Activated B cell treated with CpG ODN at 0.5 μM for 24 hours (primary cell): ENCODE measurements at regions of chr15 and their contacts with region 1.

Region 1: GRCh38 chr15:49279521-49280456 is 109.7 kb downstream of the GALK2 start:
- DNase-seq: no peak
- ATAC-seq: no peak
- H3K4me3 Mint-ChIP-seq: no peak overlapping the region
- H3K27ac Mint-ChIP-seq: no peak overlapping the region
- H3K4me1 Mint-ChIP-seq: no peaks in the 10 kb centered on the region
- H3K27me3 Mint-ChIP-seq: no peaks in the 10 kb centered on the region
- CTCF ChIP-seq: no peak

Region 2: GRCh38 chr15:49223536-49224286 is 56.1 kb before region 1 on chr15:
- CTCF ChIA-PET with region 1: no interaction called
- POLR2A ChIA-PET with region 1: no interaction called
- intact Hi-C with region 1: loop called (anchors 2 kb)
- DNase-seq: no peak
- ATAC-seq: no peak
- H3K4me3 Mint-ChIP-seq: no peak overlapping the region
- H3K27ac Mint-ChIP-seq: no peak overlapping the region
- H3K4me1 Mint-ChIP-seq: peaks cover 2% of the 10 kb centered on the region
- H3K27me3 Mint-ChIP-seq: no peaks in the 10 kb centered on the region
- CTCF ChIP-seq: no peak

Region 3: GRCh38 chr15:49558924-49559323 is 279.1 kb after region 1 on chr15:
- CTCF ChIA-PET with region 1: no interaction called
- POLR2A ChIA-PET with region 1: no interaction called
- intact Hi-C with region 1: no loop called
- DNase-seq: no peak
- ATAC-seq: no peak
- H3K4me3 Mint-ChIP-seq: no peak overlapping the region
- H3K27ac Mint-ChIP-seq: no peak overlapping the region
- H3K4me1 Mint-ChIP-seq: no peaks in the 10 kb centered on the region
- H3K27me3 Mint-ChIP-seq: peaks cover 3% of the 10 kb centered on the region
- CTCF ChIP-seq: no peak